ENCODE measurements at regions of chr2 and their contacts with region 1.

Region 1: GRCh38 chr2:70977605-70978205 is 725 bp upstream of the ANKRD53 start:
- DNase-seq: peak; percentile 7
- H3K4me3 ChIP-seq: peak overlapping the region; percentile 61 to 88
- H3K27ac ChIP-seq: peak overlapping the region in 1 of 2 experiments; percentile 87; a peak in 2 of 4 replicates
- H3K4me1 ChIP-seq: peaks cover 3 to 6% of the 10 kb centered on the region in 2 experiments; a peak in 3 of 4 replicates
- H3K27me3 ChIP-seq: no peaks in the 10 kb centered on the region
- CTCF ChIP-seq: no peak
- EP300 ChIP-seq: no peak
- RAD21 ChIP-seq: no peak

Region 2: GRCh38 chr2:70964596-70965386 is 12.9 kb before region 1 on chr2:
- CTCF ChIA-PET with region 1: interaction called, 41 read pairs
- POLR2A ChIA-PET with region 1: no interaction called
- DNase-seq: peak; percentile 84
- H3K4me3 ChIP-seq: peak overlapping the region; percentile 39 to 58
- H3K27ac ChIP-seq: no peak overlapping the region
- H3K4me1 ChIP-seq: no peaks in the 10 kb centered on the region; a peak in 1 of 4 replicates
- H3K27me3 ChIP-seq: no peaks in the 10 kb centered on the region
- CTCF ChIP-seq: peak; percentile 64
- EP300 ChIP-seq: no peak
- RAD21 ChIP-seq: peak; percentile 62

Measured in SK-N-SH (cell line).